ENCODE measurements at regions of chr3 and their contacts with region 1.

Region 1: GRCh38 chr3:155178810-155179436 is 98.8 kb downstream of the MME start:
- DNase-seq: no peak
- H3K4me3 Mint-ChIP-seq: no peak overlapping the region
- H3K27ac Mint-ChIP-seq: no peak overlapping the region
- H3K4me1 Mint-ChIP-seq: peaks cover 12% of the 10 kb centered on the region
- H3K27me3 Mint-ChIP-seq: no peaks in the 10 kb centered on the region
- CTCF ChIP-seq: no peak

Region 2: DNA sequence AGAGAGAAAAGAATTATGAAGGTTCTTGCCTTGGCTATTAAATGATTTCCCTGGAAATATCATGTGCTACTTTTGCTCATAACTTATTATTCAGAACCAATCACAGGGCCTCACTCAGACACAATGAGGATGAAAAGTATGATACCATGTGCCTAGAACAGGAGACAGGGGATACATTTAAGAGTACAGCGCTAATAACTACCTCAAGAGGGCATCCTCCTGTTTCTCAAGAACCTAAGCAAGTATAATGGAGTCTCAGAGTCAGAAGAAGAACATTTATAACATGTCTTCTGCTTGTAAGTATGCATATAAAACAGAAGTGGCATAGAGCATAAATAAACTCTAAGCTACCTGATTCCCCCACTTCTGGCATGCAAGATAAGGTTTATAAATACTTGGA is 224.2 kb before region 1 on chr3:
- CTCF ChIA-PET with region 1: no interaction called
- intact Hi-C with region 1: loop called (anchors 5 kb)
- DNase-seq: no peak
- H3K4me3 Mint-ChIP-seq: no peak overlapping the region
- H3K27ac Mint-ChIP-seq: no peak overlapping the region
- H3K4me1 Mint-ChIP-seq: peaks cover 13% of the 10 kb centered on the region
- H3K27me3 Mint-ChIP-seq: no peaks in the 10 kb centered on the region
- CTCF ChIP-seq: peak; percentile 37

Measured in Calu3 (cell line).